H1 (cell line): ENCODE measurements at regions of chr3 and their contacts with region 1.

Region 1: DNA sequence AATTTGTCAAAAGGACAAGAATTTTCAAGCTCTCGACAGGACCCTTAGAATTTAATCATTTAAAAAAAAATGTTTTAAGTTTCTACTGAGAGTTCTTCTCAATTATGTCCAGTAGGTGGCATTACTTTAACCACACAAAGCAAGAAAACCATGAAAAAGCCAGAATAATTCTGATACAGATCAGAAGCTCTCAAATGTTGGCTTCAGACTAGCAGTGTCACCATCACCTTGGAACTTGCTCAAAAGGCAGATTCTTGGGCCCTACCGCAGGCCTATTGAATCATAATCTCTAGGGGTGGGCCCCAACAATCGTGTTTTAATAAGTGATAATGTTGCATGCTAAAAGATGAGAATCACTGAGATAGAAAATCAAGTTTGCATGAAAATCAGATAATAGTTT is 99.5 kb upstream of the KCNMB2 start:
- DNase-seq: no peak
- H3K4me3 ChIP-seq: no peak overlapping the region
- H3K27ac ChIP-seq: no peak overlapping the region
- H3K4me1 ChIP-seq: peaks cover 0 to 5% (median 0%) of the 10 kb centered on the region in 4 experiments; a peak in 2 of 7 replicates
- H3K27me3 ChIP-seq: no peaks in the 10 kb centered on the region
- CTCF ChIP-seq: peak in 2 of 3 experiments; percentile 35 to 37; a peak in 2 of 4 replicates
- EP300 ChIP-seq: no peak
- POLR2A ChIP-seq: no peak
- RAD21 ChIP-seq: peak; percentile 52 to 60

Region 2: DNA sequence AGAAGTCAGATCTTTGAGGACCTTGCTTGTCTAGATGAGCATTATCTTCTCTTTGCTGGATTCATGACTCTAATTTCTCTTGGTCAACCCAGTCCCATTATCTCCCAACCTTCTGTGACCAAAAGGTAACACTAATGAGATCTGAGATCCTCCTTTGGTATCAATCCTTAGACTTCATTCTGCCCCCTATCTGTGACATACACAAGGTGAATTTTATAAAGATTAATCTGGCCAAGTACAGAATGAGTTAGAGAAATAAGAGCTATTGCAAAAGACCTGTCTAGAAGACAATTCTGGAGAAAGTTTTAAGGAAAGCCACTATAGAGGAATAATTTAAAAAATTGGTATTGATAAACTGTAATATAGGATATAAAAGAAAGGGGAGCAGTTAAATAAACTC is 14.4 kb before region 1 on chr3:
- CTCF ChIA-PET with region 1: interaction called, 11 read pairs
- POLR2A ChIA-PET with region 1: no interaction called
- DNase-seq: no peak
- H3K4me3 ChIP-seq: no peak overlapping the region
- H3K27ac ChIP-seq: no peak overlapping the region
- H3K4me1 ChIP-seq: no peaks in the 10 kb centered on the region
- H3K27me3 ChIP-seq: no peaks in the 10 kb centered on the region
- CTCF ChIP-seq: peak in 1 of 3 experiments; percentile 16; a peak in 1 of 4 replicates
- EP300 ChIP-seq: no peak
- POLR2A ChIP-seq: no peak
- RAD21 ChIP-seq: no peak

Region 3: DNA sequence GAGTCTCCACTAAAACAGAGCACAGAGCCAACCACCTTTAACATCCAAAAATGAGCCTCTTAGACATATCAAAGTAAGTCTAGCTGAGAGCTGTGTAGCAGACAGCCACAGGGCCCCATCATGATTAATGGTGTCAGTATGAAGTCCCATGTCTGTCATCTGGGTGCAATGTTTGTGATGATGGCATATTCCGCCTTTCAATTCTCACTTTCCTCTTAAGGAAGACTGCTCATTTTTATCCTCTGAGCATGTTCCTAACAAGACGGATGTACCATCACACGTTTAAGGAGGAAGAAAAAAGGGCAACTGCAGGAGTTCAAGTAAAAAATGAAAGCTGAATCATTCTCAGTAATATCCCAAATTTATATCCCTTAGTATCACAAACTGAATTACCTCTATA is 13.7 kb after region 1 on chr3:
- CTCF ChIA-PET with region 1: interaction called, 20 read pairs
- POLR2A ChIA-PET with region 1: no interaction called
- DNase-seq: no peak
- H3K4me3 ChIP-seq: no peak overlapping the region
- H3K27ac ChIP-seq: no peak overlapping the region
- H3K4me1 ChIP-seq: no peaks in the 10 kb centered on the region
- H3K27me3 ChIP-seq: no peaks in the 10 kb centered on the region
- CTCF ChIP-seq: no peak
- EP300 ChIP-seq: no peak
- POLR2A ChIP-seq: no peak
- RAD21 ChIP-seq: no peak

Region 4: DNA sequence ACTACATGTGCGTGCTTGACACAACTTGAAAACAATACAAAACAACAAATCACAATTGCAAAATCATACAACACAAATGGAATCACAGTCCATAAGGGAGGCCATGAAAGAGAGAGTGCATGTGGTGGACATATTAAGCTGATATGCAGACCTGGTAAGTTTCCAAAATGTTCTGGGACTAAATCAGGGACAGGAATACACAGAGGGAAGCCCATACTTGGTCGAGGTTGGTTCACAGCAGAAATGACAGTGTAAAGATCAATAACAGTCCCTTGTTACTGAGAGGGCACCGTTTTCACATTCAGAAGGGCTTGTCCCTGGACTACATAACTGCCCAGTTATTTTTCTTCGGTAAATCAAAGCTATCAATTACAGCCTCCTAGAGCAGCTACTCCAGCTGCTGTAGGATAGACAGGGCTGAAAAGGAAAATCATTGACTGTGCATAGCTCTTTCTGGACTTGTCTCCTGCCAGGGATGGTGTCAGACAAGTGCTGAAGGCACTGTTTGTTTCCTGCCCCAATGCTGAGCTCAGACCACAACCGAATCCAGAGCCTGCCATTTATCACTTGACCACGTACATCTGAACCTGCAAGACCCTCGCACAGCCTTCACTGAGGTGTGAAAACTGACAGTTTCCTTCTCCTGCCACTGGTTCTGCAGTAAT is 20.0 kb after region 1 on chr3:
- CTCF ChIA-PET with region 1: interaction called, 11 read pairs
- POLR2A ChIA-PET with region 1: interaction called, 3 read pairs
- DNase-seq: no peak
- H3K4me3 ChIP-seq: no peak overlapping the region
- H3K27ac ChIP-seq: no peak overlapping the region
- H3K4me1 ChIP-seq: no peaks in the 10 kb centered on the region
- H3K27me3 ChIP-seq: no peaks in the 10 kb centered on the region
- CTCF ChIP-seq: no peak
- EP300 ChIP-seq: no peak
- POLR2A ChIP-seq: no peak
- RAD21 ChIP-seq: no peak

Region 5: GRCh38 chr3:178536211-178537079 is 99.7 kb after region 1 on chr3 and contains the start of gene KCNMB2:
- CTCF ChIA-PET with region 1: no interaction called
- POLR2A ChIA-PET with region 1: no interaction called
- DNase-seq: no peak
- H3K4me3 ChIP-seq: peak within 1 kb of the TSS; percentile 44 to 58 (median 52); a peak in 7 of 8 replicates
- H3K27ac ChIP-seq: no peak within 1 kb of the TSS
- H3K4me1 ChIP-seq: peaks cover 0 to 17% (median 4%) of the 10 kb centered on the region in 4 experiments; a peak in 4 of 7 replicates
- H3K27me3 ChIP-seq: peaks cover 0 to 5% (median under 1%) of the 10 kb centered on the region in 4 experiments; a peak in 3 of 7 replicates
- CTCF ChIP-seq: no peak
- EP300 ChIP-seq: no peak
- POLR2A ChIP-seq: no peak
- RAD21 ChIP-seq: no peak
- total RNA-seq, gene KCNMB2: not detected in 2 replicates

Region 6: GRCh38 chr3:178966299-178967176 is 529.8 kb after region 1 on chr3:
- CTCF ChIA-PET with region 1: interaction called, 25 read pairs
- POLR2A ChIA-PET with region 1: no interaction called
- DNase-seq: no peak
- H3K4me3 ChIP-seq: no peak overlapping the region
- H3K27ac ChIP-seq: no peak overlapping the region
- H3K4me1 ChIP-seq: peaks cover 0 to 4% (median 2%) of the 10 kb centered on the region in 4 experiments; a peak in 3 of 7 replicates
- H3K27me3 ChIP-seq: no peaks in the 10 kb centered on the region
- CTCF ChIP-seq: peak in 2 of 3 experiments; percentile 21 to 40; a peak in 2 of 4 replicates
- EP300 ChIP-seq: no peak
- POLR2A ChIP-seq: no peak
- RAD21 ChIP-seq: peak; percentile 55 to 61